AG04450 (cell line): ENCODE measurements at regions of chr4 and their contacts with region 1.

Region 1: GRCh38 chr4:74675673-74676279 is 118.5 kb downstream of the BTC start:
- DNase-seq: peak; percentile 38
- H3K4me3 ChIP-seq: no peak overlapping the region
- H3K27ac ChIP-seq: no peak overlapping the region
- H3K27me3 ChIP-seq: no peaks in the 10 kb centered on the region
- CTCF ChIP-seq: peak; percentile 89

Region 2: DNA sequence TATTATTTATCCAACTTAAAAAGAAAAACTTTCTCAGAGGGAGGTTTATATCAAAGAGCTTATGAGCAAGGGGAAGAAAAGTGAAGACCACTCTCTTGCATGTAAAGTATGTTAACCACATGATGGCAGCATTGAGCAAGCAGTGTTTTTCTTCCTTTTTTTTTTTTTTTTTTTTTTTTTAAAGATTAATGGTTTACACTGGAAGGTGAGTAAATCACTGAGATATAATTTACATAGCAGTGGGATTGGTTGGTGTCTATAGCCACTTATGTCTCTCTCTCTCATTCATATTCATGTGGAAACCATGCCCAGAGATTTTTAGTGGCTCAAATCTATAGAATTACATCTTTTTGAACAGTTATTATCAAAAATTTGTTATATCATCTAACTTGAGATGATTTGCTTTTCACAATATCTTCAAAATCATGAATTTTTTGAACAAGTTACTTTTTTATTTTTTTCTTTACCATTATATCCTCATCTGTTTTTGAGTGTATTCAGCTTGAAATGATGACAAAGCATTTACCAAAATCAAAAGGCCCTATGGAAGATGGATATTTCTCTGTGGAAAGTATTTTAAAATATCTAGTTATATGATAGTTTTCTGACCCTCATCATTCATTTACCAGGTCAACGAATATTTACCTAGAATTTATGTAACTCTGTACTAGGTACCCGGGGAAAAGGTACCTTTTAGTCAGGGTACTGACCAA is 486.3 kb before region 1 on chr4:
- CTCF ChIA-PET with region 1: interaction called, 12 read pairs
- POLR2A ChIA-PET with region 1: no interaction called
- DNase-seq: peak; percentile 15
- H3K4me3 ChIP-seq: no peak overlapping the region
- H3K27ac ChIP-seq: no peak overlapping the region
- H3K27me3 ChIP-seq: no peaks in the 10 kb centered on the region
- CTCF ChIP-seq: peak; percentile 74

Region 3: DNA sequence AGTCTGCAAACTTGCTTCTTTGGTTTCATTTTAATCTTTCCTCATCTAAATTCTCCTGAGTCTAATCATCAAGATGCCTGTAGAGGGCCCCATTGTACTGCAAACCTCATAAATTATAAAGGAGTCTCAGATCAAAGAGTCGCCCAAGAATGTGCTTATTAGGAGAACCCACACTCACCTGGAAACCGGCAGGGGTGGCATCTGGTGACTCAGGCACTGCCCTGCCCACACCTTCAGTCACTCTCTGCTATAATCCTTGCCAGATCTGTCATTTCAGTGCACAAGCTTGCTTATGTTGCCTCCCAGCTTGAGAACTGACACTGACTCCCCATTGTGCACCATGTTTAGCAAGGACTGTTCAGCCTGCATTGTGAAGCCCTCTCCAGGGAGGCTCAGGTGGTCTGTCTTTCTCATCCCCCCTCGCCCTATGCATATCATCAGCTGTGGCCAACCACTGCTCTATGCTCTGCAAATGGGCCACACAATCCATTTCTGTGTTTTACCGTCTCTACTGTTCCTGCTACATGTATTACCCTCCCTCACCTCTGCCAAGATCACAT is 355.1 kb before region 1 on chr4:
- CTCF ChIA-PET with region 1: interaction called, 365 read pairs
- POLR2A ChIA-PET with region 1: interaction called, 3 read pairs
- DNase-seq: peak; percentile 46
- H3K4me3 ChIP-seq: no peak overlapping the region
- H3K27ac ChIP-seq: no peak overlapping the region
- H3K27me3 ChIP-seq: no peaks in the 10 kb centered on the region
- CTCF ChIP-seq: peak; percentile 69

Region 4: GRCh38 chr4:74364652-74365491 is 310.9 kb before region 1 on chr4 and contains the start of gene EREG:
- CTCF ChIA-PET with region 1: interaction called, 70 read pairs
- POLR2A ChIA-PET with region 1: no interaction called
- DNase-seq: no peak
- H3K4me3 ChIP-seq: peak within 1 kb of the TSS; percentile 65
- H3K27ac ChIP-seq: peak within 1 kb of the TSS; percentile 55
- H3K27me3 ChIP-seq: no peaks in the 10 kb centered on the region
- CTCF ChIP-seq: no peak
- polyA plus RNA-seq, gene EREG: 1.5 and 1.8 TPM in 2 replicates

Region 5: DNA sequence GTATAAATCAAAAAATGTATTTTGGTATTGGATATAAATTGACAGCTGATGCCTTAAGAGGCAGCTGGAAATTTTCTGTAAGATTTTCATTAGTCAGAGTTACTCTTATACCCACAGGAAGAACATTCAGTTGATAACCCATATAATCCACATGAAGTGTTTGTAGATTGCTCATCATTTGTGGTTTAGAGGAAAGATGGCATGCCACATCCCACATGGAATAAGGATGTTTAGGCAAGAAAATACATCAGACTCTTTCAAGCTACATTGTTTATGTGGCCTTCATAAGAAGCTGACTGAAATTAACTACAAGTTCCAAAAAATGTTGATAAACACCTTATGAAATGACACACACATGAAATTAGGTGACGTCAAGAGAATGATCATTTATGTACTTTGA is 174.2 kb before region 1 on chr4:
- CTCF ChIA-PET with region 1: interaction called, 10 read pairs
- POLR2A ChIA-PET with region 1: no interaction called
- DNase-seq: peak; percentile 75
- H3K4me3 ChIP-seq: no peak overlapping the region
- H3K27ac ChIP-seq: no peak overlapping the region
- H3K27me3 ChIP-seq: no peaks in the 10 kb centered on the region
- CTCF ChIP-seq: no peak

Region 6: DNA sequence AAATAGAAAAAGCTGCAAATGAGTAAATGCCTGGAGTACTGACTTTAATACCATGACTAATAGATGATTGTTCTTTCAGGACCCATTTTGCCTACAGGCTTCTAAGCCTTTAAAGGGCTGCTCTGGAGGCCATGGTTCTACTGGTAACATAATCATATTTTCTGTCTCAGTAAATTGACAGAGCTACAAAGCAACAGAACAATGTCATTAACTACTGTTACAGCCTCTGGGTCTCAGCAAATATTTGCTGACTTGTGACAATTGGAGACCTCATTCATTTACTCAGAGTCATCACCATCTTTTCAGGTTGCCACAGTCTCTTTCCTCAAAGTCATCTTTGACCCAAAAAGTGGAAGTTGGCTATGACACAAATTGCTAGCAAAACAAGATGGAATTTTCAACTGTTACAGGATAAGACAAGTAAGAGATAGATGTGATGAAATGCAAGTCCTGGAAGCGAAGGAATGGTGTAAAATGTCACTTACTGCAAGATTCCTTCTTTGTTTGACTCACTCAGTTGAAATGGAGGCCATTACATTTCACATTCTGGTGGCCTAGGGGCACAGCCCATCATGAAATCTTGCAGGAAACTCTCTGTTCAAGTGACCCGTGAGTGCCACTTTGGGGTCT is 14.1 kb before region 1 on chr4:
- CTCF ChIA-PET with region 1: interaction called, 15 read pairs
- POLR2A ChIA-PET with region 1: interaction called, 3 read pairs
- DNase-seq: no peak
- H3K4me3 ChIP-seq: no peak overlapping the region
- H3K27ac ChIP-seq: no peak overlapping the region
- H3K27me3 ChIP-seq: no peaks in the 10 kb centered on the region
- CTCF ChIP-seq: no peak

Region 7: GRCh38 chr4:74904509-74905065 is 228.8 kb after region 1 on chr4:
- CTCF ChIA-PET with region 1: no interaction called
- POLR2A ChIA-PET with region 1: no interaction called
- DNase-seq: no peak
- H3K4me3 ChIP-seq: no peak overlapping the region
- H3K27ac ChIP-seq: no peak overlapping the region
- H3K27me3 ChIP-seq: no peaks in the 10 kb centered on the region
- CTCF ChIP-seq: no peak

Region 8: GRCh38 chr4:75030733-75031132 is 355.0 kb after region 1 on chr4:
- CTCF ChIA-PET with region 1: no interaction called
- POLR2A ChIA-PET with region 1: no interaction called
- DNase-seq: no peak
- H3K4me3 ChIP-seq: no peak overlapping the region
- H3K27ac ChIP-seq: no peak overlapping the region
- H3K27me3 ChIP-seq: no peaks in the 10 kb centered on the region
- CTCF ChIP-seq: no peak